Activated CD4-positive, alpha-beta T cell treated with anti-CD3 and anti-CD28 coated beads for 36 hours (primary cell): ENCODE measurements at regions of chr16 and their contacts with region 1.

Region 1: GRCh38 chr16:58129097-58129936 is at the start of gene CFAP20:
- DNase-seq: peak; percentile 98
- ATAC-seq: peak; percentile 94
- H3K4me3 Mint-ChIP-seq: peak within 1 kb of the TSS; percentile 75
- H3K27ac Mint-ChIP-seq: peak within 1 kb of the TSS; percentile 84
- H3K4me1 Mint-ChIP-seq: peaks cover 38% of the 10 kb centered on the region
- H3K27me3 Mint-ChIP-seq: no peaks in the 10 kb centered on the region
- total RNA-seq, gene CFAP20: 45.9 to 48.7 TPM

Region 2: GRCh38 chr16:57244767-57245471 is 884.4 kb before region 1 on chr16 and contains the start of gene ARL2BP:
- CTCF ChIA-PET with region 1: no interaction called
- POLR2A ChIA-PET with region 1: no interaction called
- intact Hi-C with region 1: loop called in 1 of 2 experiments (anchors 2 kb)
- DNase-seq: peak; percentile 99
- ATAC-seq: peak; percentile 97
- H3K4me3 Mint-ChIP-seq: peak within 1 kb of the TSS; percentile 86
- H3K27ac Mint-ChIP-seq: peak within 1 kb of the TSS; percentile 92
- H3K4me1 Mint-ChIP-seq: peaks cover 19% of the 10 kb centered on the region
- H3K27me3 Mint-ChIP-seq: no peaks in the 10 kb centered on the region
- total RNA-seq, gene ARL2BP: 9.9 to 11.1 TPM

Region 3: DNA sequence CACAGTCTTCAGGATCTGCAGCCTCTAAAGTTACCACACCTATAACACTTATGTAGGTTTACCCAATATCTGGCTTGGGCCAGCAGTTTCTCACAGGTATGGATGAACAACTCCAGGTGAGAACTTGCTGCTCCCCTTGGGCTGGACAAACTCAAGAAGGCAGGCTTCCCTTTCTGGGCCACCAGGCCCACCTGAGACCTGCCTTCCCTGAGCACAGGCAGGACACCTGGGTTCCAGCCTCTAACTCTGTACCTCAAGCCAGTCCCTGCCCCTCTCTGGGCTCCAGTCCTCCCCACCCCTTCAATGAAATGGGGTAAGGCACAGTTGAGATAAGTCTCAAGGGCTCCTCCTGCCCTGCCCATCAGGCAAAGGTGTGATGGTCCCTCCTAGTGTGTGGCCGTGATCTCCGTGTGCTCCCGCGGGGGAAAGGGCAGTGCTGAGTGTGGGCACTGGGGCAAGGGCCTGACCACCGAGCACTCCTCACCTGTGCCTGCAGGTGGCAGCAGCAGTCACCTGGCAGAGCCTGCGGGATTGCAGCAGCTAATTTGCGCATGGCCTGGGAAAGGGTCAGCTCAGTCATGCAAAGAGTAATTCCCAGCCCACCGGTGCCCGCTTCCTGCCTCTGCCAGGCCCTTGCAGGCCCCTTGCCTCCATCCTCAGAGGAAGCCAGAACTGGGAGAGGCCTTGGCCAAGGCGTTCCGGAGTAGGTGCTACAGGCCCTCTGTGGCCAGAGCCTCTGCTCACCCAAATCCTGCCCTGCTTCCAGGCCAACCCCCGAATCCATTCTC is 529.1 kb before region 1 on chr16:
- CTCF ChIA-PET with region 1: no interaction called
- POLR2A ChIA-PET with region 1: no interaction called
- intact Hi-C with region 1: loop called in 1 of 2 experiments (anchors 5 kb)
- DNase-seq: peak; percentile 73
- ATAC-seq: peak; percentile 18
- H3K4me3 Mint-ChIP-seq: no peak overlapping the region
- H3K27ac Mint-ChIP-seq: no peak overlapping the region
- H3K4me1 Mint-ChIP-seq: peaks cover 35% of the 10 kb centered on the region
- H3K27me3 Mint-ChIP-seq: no peaks in the 10 kb centered on the region

Region 4: DNA sequence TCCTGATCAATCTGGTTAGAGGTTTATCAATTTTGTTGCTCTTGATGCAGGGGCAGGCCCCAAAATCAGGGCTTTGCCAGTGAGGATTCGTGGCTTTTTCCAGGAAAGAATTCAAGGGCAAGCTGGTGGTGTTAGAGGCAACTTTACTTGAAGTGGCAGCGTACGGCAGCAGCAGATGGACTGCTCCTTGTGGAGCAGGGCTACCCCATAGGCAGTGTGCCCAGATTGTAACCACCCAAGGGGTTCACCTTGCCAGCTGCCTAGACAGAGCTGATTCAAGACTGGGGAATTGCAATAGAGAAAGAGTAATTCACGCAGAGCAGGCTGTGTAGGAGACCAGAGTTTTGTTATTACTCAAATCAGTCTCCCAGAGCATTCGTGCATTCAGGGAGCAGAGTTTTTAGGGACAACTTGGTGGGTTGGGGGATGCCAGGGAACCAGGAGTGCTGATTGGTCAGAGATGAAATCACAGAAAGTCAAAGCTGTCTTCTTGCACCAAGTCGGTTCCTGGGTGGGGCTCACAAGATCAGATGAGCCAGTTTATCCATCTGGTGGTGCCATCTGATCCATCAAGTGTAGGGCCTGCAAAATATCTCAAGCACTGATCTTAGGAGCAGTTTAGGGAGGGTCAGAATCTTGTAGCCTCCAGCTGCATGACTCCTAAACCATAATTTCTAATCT is 417.8 kb before region 1 on chr16:
- CTCF ChIA-PET with region 1: no interaction called
- POLR2A ChIA-PET with region 1: no interaction called
- intact Hi-C with region 1: no loop called
- DNase-seq: no peak
- ATAC-seq: no peak
- H3K4me3 Mint-ChIP-seq: no peak overlapping the region
- H3K27ac Mint-ChIP-seq: no peak overlapping the region
- H3K4me1 Mint-ChIP-seq: peaks cover 4% of the 10 kb centered on the region
- H3K27me3 Mint-ChIP-seq: peaks cover 3% of the 10 kb centered on the region

Region 5: GRCh38 chr16:57984331-57985203 is 144.8 kb before region 1 on chr16:
- CTCF ChIA-PET with region 1: no interaction called
- POLR2A ChIA-PET with region 1: no interaction called
- intact Hi-C with region 1: loop called in 1 of 2 experiments (anchors 1 kb)
- DNase-seq: peak; percentile 97
- ATAC-seq: peak; percentile 100
- H3K4me3 Mint-ChIP-seq: peak overlapping the region; percentile 76
- H3K27ac Mint-ChIP-seq: no peak overlapping the region
- H3K4me1 Mint-ChIP-seq: peaks cover 7% of the 10 kb centered on the region
- H3K27me3 Mint-ChIP-seq: no peaks in the 10 kb centered on the region

Region 6: GRCh38 chr16:58198022-58198683 is 68.8 kb after region 1 on chr16 and contains the start of gene CSNK2A2:
- CTCF ChIA-PET with region 1: interaction called, 5 read pairs
- POLR2A ChIA-PET with region 1: interaction called, 4 read pairs
- intact Hi-C with region 1: loop called (anchors 1 kb)
- DNase-seq: peak; percentile 84
- ATAC-seq: peak; percentile 94
- H3K4me3 Mint-ChIP-seq: peak within 1 kb of the TSS; percentile 84
- H3K27ac Mint-ChIP-seq: peak within 1 kb of the TSS; percentile 74
- H3K4me1 Mint-ChIP-seq: peaks cover 34% of the 10 kb centered on the region
- H3K27me3 Mint-ChIP-seq: peaks cover 6% of the 10 kb centered on the region
- total RNA-seq, gene CSNK2A2: 85.9 to 92.2 TPM

Region 7: GRCh38 chr16:58379736-58380135 is 250.4 kb after region 1 on chr16:
- CTCF ChIA-PET with region 1: no interaction called
- POLR2A ChIA-PET with region 1: no interaction called
- intact Hi-C with region 1: no loop called
- DNase-seq: no peak
- ATAC-seq: no peak
- H3K4me3 Mint-ChIP-seq: no peak overlapping the region
- H3K27ac Mint-ChIP-seq: no peak overlapping the region
- H3K4me1 Mint-ChIP-seq: no peaks in the 10 kb centered on the region
- H3K27me3 Mint-ChIP-seq: peaks cover 26% of the 10 kb centered on the region

Region 8: DNA sequence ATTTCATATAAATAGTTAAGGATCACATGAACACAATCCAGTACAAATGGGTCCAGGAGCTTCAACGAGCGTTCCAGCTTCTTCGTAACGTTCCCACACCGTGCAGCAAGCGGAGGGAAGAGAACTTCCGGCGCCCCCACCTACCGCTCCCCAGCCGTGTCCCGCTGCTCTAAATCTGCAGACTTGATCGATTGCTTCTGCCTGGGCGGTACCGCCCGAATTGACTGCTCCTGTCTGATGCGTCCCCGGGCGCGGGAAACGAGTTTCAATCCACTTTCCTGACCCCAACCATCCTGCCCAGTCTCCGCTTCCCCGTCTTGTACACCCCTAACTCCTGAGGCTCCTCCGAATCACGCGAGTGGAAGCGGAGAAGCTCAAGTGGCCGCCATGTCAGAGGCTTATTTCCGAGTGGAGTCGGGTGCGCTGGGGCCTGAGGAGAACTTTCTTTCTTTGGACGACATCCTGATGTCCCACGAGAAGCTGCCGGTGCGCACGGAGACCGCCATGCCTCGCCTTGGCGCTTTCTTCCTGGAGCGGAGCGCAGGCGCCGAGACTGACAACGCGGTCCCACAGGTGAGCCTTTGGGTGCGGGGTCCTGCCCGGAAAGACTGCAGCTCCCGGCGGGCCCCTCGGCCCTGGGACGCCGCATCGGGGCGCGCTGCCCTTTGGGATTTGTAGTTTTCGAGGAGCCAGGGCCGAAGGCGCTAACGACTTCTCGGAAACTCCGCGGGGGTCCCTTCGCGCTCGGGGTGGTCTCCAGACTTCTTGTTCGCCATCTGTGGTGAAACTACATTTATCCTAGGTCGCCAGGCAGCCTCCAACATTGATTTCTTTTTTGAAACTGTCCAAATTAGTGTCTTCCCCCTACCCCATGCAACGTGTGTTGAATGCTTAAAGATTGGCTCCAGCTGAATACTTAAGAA is 263.2 kb after region 1 on chr16 and contains the start of gene GINS3:
- CTCF ChIA-PET with region 1: no interaction called
- POLR2A ChIA-PET with region 1: interaction called, 6 read pairs
- intact Hi-C with region 1: loop called (anchors 1 to 2 kb)
- DNase-seq: peak; percentile 93
- ATAC-seq: peak; percentile 96
- H3K4me3 Mint-ChIP-seq: peak within 1 kb of the TSS; percentile 100
- H3K27ac Mint-ChIP-seq: peak within 1 kb of the TSS; percentile 100
- H3K4me1 Mint-ChIP-seq: peaks cover 12% of the 10 kb centered on the region
- H3K27me3 Mint-ChIP-seq: no peaks in the 10 kb centered on the region
- total RNA-seq, gene GINS3: 20.2 to 23.0 TPM